ENCODE measurements at regions of chr4 and their contacts with region 1.

Region 1: DNA sequence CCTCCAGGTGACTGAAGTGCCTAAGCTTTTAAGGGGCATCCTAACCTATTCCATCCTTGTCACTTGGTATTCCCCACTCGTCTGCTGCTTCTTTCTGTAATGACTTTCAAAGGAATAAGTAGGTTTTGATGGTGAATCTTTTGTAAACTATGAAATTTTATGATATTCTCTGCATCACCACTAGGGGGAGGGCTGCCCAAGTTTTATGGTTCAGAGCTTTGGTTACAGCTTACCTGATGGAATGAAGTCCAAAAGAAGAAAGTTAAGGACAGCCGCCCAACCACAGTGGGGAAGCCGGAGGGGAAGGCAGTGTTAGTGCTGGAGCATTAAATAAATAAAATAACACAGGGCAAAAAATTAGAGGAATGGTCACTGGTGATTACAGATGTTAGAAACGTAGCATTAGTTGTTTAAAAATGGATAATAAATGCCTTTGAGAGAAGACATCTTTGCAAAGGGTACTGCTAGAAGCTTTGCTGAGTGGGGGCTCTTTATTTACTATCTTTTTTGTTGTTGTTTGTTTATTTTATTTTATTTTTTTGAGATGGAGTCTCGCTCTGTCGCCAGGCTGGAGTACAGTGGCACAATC is 204.9 kb downstream of the GBA3 start:
- DNase-seq: peak in 1 of 2 experiments; percentile 19
- H3K4me3 ChIP-seq: no peak overlapping the region
- H3K27ac ChIP-seq: no peak overlapping the region
- H3K4me1 ChIP-seq: no peaks in the 10 kb centered on the region
- H3K27me3 ChIP-seq: no peaks in the 10 kb centered on the region
- CTCF ChIP-seq: peak; percentile 85

Region 2: GRCh38 chr4:23614284-23614892 is 716.8 kb after region 1 on chr4:
- CTCF ChIA-PET with region 1: no interaction called
- POLR2A ChIA-PET with region 1: no interaction called
- intact Hi-C with region 1: loop called (anchors 10 kb)
- DNase-seq: no peak
- H3K4me3 ChIP-seq: no peak overlapping the region
- H3K27ac ChIP-seq: no peak overlapping the region
- H3K4me1 ChIP-seq: no peaks in the 10 kb centered on the region
- H3K27me3 ChIP-seq: no peaks in the 10 kb centered on the region
- CTCF ChIP-seq: peak; percentile 50

Region 3: DNA sequence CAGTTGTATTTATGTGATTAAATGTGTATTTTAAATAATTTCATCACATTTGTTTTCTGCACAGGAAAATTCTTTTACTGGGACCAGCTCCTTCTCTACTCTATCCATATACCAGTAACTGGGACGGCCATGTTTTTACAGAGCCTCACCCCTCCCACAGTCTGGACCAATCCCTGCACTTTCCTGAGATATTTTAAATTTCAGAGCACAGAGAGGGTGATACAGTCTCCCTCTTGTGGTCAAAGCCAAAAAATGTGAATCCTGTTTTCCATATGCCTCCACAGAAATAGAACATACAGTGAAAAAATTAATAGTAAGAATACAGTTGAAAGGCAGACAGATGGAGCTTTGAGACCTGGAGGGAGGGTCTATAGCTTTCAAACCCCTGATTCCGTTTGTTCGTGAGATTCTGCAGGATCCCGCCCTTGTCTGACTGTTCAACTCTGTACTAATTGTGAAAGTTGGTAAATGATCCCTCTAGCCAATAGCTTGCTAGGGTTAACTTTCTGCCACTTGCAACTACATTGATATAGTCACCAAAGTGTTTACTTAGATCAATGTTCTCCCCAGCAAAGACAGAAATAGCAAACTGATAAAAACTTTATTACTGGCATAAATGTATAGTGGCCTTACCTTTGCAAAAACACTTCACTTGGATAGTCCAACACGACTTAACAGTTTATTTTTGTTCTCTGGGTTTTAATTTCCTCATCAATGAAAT is 820.1 kb after region 1 on chr4:
- CTCF ChIA-PET with region 1: no interaction called
- POLR2A ChIA-PET with region 1: no interaction called
- intact Hi-C with region 1: loop called (anchors 5 kb)
- DNase-seq: peak in 1 of 2 experiments; percentile 3
- H3K4me3 ChIP-seq: no peak overlapping the region
- H3K27ac ChIP-seq: no peak overlapping the region
- H3K4me1 ChIP-seq: no peaks in the 10 kb centered on the region
- H3K27me3 ChIP-seq: no peaks in the 10 kb centered on the region
- CTCF ChIP-seq: peak; percentile 56

Region 4: DNA sequence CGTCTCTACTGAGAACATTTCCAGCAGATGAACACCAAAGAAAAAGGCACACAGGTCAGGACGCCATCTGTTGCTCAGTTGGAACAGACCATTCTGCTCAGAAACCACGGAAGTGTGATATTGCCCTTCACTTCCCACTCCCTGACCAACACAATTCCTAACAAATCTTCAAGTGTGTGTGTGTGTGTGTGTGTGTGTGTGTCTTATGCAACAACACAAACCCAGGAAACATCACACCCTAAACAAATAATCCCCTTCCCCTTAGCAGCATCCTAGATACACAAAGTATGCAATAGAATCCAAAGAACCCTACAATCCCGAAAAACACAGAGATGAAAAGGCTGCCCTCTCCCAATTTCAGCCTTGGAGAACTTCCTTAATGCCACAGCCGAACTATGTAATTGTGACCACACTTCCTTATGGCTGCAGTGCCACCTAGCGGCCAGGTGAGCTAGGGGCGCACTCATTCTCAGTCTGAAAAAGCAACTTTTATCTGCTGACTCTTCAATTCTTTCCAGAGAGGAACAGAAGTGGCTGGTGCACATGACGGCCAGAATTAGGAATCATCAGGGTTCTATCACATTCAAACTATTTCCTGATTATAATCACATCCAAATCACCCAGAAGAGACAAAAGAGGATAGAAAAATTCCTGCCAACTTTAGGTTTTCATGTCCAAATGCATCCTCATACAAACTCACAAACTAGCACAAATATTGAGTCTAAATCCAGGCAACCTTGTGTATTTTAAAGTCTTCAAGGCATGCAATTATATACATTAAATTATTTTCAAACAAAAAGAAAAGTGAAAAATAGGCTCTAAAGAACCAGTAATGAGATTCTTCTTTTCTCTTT is 1521.8 kb after region 1 on chr4:
- CTCF ChIA-PET with region 1: no interaction called
- POLR2A ChIA-PET with region 1: no interaction called
- intact Hi-C with region 1: loop called (anchors 1 kb)
- DNase-seq: peak; percentile 60 to 61
- H3K4me3 ChIP-seq: no peak overlapping the region
- H3K27ac ChIP-seq: no peak overlapping the region
- H3K4me1 ChIP-seq: no peaks in the 10 kb centered on the region
- H3K27me3 ChIP-seq: peaks cover 13% of the 10 kb centered on the region; the same call in 1 of the 2 replicates
- CTCF ChIP-seq: peak; percentile 89